Heart right ventricle (tissue), 16 donors: ENCODE measurements at regions of chr2 and their contacts with region 1.

Region 1: DNA sequence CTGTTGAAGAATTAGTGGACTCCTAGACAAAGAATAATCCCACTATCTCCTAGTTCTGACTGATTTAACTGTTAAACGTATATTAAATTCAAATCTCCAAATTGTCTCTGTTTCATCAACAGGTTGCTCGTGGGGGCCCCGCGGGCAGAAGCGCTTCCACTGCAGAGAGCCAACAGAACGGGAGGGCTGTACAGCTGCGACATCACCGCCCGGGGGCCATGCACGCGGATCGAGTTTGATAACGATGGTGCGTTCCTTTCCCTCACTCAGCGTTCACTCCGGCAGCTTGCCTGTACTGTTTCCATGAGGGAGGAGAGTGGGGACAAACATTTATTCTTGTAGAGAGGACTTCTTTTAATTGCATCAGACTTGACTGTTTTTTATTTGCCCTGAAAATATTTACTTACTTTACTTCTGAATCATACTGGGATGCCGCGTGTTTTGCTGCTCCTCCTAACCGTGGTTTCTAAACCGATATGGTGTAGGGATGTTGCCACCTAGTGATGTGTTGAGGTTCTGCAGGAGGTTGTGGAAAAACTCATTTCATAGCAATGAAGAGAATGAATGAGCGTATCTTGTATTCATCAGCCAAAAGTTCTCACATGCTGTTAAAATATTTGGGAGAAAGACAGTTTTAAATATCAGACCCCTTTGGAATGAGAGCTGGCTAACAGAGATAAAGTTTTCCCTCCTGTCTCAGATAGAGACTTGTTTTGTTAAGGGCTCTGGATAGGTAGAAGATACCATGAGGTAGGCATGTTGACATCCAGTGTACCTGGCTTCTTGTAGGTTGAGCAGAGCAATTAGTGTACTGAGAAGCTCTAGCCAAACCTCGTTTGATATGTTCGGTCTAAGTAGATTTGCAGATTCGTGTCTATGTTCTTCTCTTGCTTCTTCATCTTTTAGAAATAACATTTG is 38.3 kb downstream of the ITGA6 start:
- DNase-seq: peak; percentile 22 to 73
- ATAC-seq: peak; percentile 56 to 80 (median 70)
- H3K4me3 ChIP-seq: peak overlapping the region in 5 of 10 donors; percentile 12 to 33 (median 20)
- H3K27ac ChIP-seq: peak overlapping the region in 3 of 10 donors; percentile 16 to 59 (median 21)
- H3K4me1 ChIP-seq: peaks cover 0 to 59% (median 43%) of the 10 kb centered on the region in 9 donors
- H3K27me3 ChIP-seq: peaks cover 0 to 6% (median 0%) of the 10 kb centered on the region in 7 donors
- CTCF ChIP-seq: peak; percentile 67 to 92 (median 86)

Region 2: GRCh38 chr2:171598713-171599319 is 866.9 kb before region 1 on chr2:
- intact Hi-C with region 1: loop called in 1 of 10 experiments (anchors 10 kb)
- DNase-seq: peak in 1 of 2 donors; percentile 34
- ATAC-seq: peak in 7 of 8 donors; percentile 55 to 84 (median 67)
- H3K4me3 ChIP-seq: no peak overlapping the region
- H3K27ac ChIP-seq: no peak overlapping the region
- H3K4me1 ChIP-seq: peaks cover 0 to 4% (median 0%) of the 10 kb centered on the region in 9 donors
- H3K27me3 ChIP-seq: peaks cover 0 to 33% (median 6%) of the 10 kb centered on the region in 7 donors
- CTCF ChIP-seq: peak; percentile 49 to 81 (median 73)

Region 3: GRCh38 chr2:172172513-172173173 is 293.0 kb before region 1 on chr2:
- intact Hi-C with region 1: loop called (anchors 1 to 5 kb)
- DNase-seq: peak; percentile 60 to 69
- ATAC-seq: peak; percentile 98 to 100 (median 99)
- H3K4me3 ChIP-seq: peak overlapping the region; percentile 40 to 69 (median 64)
- H3K27ac ChIP-seq: peak overlapping the region in 8 of 10 donors; percentile 7 to 77 (median 44)
- H3K4me1 ChIP-seq: peaks cover 0 to 13% (median 7%) of the 10 kb centered on the region in 9 donors
- H3K27me3 ChIP-seq: peaks cover 0 to 20% (median 8%) of the 10 kb centered on the region in 7 donors
- CTCF ChIP-seq: peak; percentile 56 to 96 (median 89)

Region 4: GRCh38 chr2:172270278-172271079 is 195.2 kb before region 1 on chr2:
- intact Hi-C with region 1: loop called in 1 of 10 experiments (anchors 10 kb)
- DNase-seq: no peak
- ATAC-seq: no peak
- H3K4me3 ChIP-seq: no peak overlapping the region
- H3K27ac ChIP-seq: peak overlapping the region in 1 of 10 donors; percentile 8
- H3K4me1 ChIP-seq: peaks cover 0 to 9% (median 0%) of the 10 kb centered on the region in 9 donors
- H3K27me3 ChIP-seq: peaks cover 0 to 7% (median 0%) of the 10 kb centered on the region in 7 donors
- CTCF ChIP-seq: no peak

Region 5: GRCh38 chr2:172329774-172330671 is 135.7 kb before region 1 on chr2:
- intact Hi-C with region 1: no loop called
- DNase-seq: peak; percentile 76 to 77
- ATAC-seq: peak; percentile 75 to 94 (median 88)
- H3K4me3 ChIP-seq: no peak overlapping the region
- H3K27ac ChIP-seq: peak overlapping the region in 9 of 10 donors; percentile 36 to 83 (median 61)
- H3K4me1 ChIP-seq: peaks cover 0 to 35% (median 15%) of the 10 kb centered on the region in 9 donors
- H3K27me3 ChIP-seq: no peaks in the 10 kb centered on the region
- CTCF ChIP-seq: no peak

Region 6: DNA sequence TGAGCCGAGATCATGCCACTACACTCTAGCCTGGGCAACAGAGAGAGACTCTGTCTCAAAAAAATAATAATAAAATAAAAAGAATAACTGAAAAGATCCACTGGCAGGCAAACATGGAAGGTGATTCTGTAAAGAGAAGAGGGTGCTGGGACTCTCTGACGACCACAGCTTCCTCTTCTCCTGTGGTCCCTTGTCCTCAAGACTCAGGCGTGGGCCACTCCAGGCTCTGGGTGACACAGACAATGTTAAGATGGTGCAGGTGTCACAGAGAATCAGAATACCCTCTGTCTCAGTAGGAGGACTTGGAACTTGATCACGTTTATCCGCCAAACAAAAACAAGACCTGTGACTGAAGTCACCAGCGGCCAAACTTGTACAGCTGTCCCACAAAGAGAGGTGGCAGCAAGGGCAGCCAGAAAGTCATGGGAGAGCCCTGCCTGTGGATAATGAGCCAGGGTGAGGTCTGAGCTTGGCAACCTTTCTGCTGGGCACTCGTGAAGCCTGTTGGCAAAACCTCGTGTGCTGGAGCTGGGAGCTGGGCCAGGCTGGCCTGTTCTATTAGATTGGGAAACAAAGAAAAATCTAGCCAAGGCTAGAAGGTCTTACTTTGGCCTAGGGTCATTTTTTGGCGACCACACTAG is 114.7 kb before region 1 on chr2:
- intact Hi-C with region 1: loop called in 1 of 10 experiments (anchors 10 kb)
- DNase-seq: peak; percentile 73 to 84
- ATAC-seq: peak; percentile 92 to 100 (median 98)
- H3K4me3 ChIP-seq: no peak overlapping the region
- H3K27ac ChIP-seq: peak overlapping the region; percentile 46 to 88 (median 73)
- H3K4me1 ChIP-seq: peaks cover 0 to 15% (median 0%) of the 10 kb centered on the region in 9 donors
- H3K27me3 ChIP-seq: no peaks in the 10 kb centered on the region
- CTCF ChIP-seq: peak in 3 of 9 donors; percentile 18 to 35 (median 27)

Region 7: GRCh38 chr2:172397148-172397834 is 68.4 kb before region 1 on chr2:
- intact Hi-C with region 1: no loop called
- DNase-seq: no peak
- ATAC-seq: peak in 3 of 8 donors; percentile 18 to 29 (median 24)
- H3K4me3 ChIP-seq: no peak overlapping the region
- H3K27ac ChIP-seq: peak overlapping the region in 6 of 10 donors; percentile 29 to 65 (median 50)
- H3K4me1 ChIP-seq: peaks cover 5 to 70% (median 45%) of the 10 kb centered on the region in 9 donors
- H3K27me3 ChIP-seq: no peaks in the 10 kb centered on the region
- CTCF ChIP-seq: no peak

Region 8: GRCh38 chr2:172516299-172516698 is 50.6 kb after region 1 on chr2:
- intact Hi-C with region 1: no loop called
- DNase-seq: no peak
- ATAC-seq: no peak
- H3K4me3 ChIP-seq: no peak overlapping the region
- H3K27ac ChIP-seq: no peak overlapping the region
- H3K4me1 ChIP-seq: no peaks in the 10 kb centered on the region
- H3K27me3 ChIP-seq: no peaks in the 10 kb centered on the region
- CTCF ChIP-seq: no peak

Region 9: GRCh38 chr2:172693037-172693436 is 227.4 kb after region 1 on chr2:
- intact Hi-C with region 1: no loop called
- DNase-seq: peak; percentile 48 to 74
- ATAC-seq: peak; percentile 90 to 99 (median 98)
- H3K4me3 ChIP-seq: no peak overlapping the region
- H3K27ac ChIP-seq: peak overlapping the region in 2 of 10 donors; percentile 5 to 28
- H3K4me1 ChIP-seq: peaks cover 0 to 19% (median 13%) of the 10 kb centered on the region in 9 donors
- H3K27me3 ChIP-seq: peaks cover 0 to 4% (median 0%) of the 10 kb centered on the region in 7 donors
- CTCF ChIP-seq: no peak